ENCODE measurements at regions of chr9 and their contacts with region 1.

Region 1: DNA sequence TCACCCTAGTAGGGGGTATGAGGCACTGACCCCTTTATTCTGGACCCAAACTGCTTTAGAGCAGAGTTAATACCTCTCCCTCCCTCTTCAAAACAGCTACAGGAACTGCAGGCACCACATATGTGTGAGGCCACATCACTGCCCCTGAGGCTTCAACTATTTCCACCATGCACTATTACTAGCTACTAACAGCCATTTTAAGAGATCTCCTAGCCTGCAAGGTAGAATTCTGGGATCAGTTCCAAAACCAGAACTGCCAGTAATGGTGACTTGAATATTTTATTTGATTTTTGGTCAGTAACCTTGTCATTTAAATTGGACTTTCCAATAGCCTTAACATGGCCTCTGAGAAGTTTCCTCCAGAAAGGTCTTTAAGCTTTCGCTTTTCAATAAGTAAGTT is 55.3 kb upstream of the FSD1L start:
- DNase-seq: no peak
- ATAC-seq: no peak
- H3K4me3 ChIP-seq: no peak overlapping the region
- H3K27ac ChIP-seq: no peak overlapping the region
- H3K4me1 ChIP-seq: no peaks in the 10 kb centered on the region
- H3K27me3 ChIP-seq: no peaks in the 10 kb centered on the region

Region 2: DNA sequence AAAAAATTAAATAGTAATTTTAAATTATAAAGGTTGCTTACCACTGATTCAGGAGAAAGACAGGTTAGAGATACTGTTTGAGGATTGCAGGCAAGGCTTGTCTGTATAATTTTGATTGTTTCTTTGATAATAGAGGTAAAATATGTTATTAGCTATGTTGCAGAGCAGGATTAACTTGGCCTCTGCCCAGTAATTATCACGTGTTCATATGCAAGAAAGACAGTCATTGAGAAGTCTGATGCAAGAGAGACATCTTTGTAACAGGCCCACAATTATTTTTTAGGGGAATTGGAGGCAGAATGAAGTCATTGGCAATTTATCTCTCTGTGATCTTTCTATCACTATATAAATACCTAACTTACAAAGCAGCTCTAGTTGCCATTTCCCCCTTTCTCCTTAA is 102.1 kb before region 1 on chr9:
- intact Hi-C with region 1: no loop called
- DNase-seq: no peak
- ATAC-seq: no peak
- H3K4me3 ChIP-seq: no peak overlapping the region
- H3K27ac ChIP-seq: no peak overlapping the region
- H3K4me1 ChIP-seq: no peaks in the 10 kb centered on the region
- H3K27me3 ChIP-seq: no peaks in the 10 kb centered on the region

Region 3: DNA sequence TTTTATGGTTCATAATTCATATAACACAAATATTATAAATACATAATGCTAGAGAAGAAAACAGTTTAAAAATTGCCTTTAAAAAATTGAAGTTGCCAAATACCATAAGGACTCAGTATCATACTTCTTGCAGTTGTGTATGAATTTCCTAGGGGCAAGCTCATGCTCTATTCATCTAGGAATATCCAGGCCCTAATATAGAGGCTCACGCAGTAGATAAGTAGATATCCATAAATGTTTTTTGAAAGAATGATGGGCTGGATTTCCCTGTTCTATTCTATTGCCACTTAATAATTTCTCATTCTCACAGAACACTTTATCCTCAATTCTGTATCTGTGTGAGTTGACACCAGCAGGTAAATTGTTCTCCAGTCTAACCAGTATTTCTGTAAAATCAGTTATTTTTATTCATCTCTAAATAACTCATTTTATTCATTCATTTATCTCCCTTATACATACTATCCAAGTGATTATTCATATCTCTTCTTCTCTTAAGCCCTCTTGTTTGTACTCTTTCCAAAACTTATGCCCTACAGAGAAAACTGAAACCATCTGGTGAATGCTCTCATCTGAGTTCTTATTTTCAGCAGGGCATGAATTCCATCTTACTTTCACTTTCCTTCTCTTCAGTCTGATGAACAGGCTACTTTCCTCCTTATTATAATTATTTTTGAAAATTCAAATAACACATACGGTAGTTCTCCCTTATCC is 50.9 kb before region 1 on chr9:
- intact Hi-C with region 1: loop called in 1 of 4 experiments (anchors 10 kb)
- DNase-seq: no peak
- ATAC-seq: no peak
- H3K4me3 ChIP-seq: no peak overlapping the region
- H3K27ac ChIP-seq: no peak overlapping the region
- H3K4me1 ChIP-seq: no peaks in the 10 kb centered on the region
- H3K27me3 ChIP-seq: no peaks in the 10 kb centered on the region

Measured in right cardiac atrium (tissue), 5 donors.